HepG2 (cell line): ENCODE measurements at regions of chr2 and their contacts with region 1.

Region 1: DNA sequence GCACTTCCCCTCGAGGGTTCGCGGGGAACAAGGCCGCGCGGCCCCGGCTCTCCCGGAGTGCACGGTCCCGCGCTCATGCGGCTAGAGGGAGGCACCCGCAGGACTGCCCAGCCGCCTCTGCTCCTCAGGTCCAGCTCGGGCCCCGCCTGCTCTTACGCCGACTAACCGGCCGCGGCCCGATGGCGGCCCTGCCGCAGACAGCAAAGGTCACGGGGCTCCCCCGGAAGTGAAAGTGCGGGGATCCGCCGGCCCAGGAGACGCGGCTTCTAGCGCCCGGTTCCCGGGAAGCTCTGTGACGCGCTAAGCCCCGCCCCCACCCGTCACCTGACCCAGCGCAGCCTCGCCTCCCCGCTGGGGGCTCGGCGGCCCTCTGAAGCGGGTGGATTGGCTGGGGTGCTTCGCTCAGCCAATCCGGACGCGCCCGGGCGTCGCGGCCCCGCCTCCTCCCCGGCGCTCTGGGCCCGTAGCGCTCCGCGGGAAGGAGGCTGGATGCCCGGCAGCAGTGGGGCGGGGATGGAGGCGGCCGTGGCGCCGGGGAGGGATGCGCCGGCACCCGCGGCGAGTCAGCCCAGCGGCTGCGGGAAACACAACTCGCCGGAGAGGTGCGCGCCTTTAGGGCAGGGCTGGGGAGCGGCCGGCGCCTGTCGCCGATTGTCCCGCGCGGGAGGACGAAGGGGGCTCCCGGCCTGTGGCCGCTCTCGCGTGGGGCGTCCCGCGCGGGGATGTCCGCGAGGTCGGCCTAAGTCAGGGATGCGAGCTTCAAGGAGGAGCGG is at the start of gene SCLY:
- DNase-seq: peak; percentile 97
- ATAC-seq: peak; percentile 96
- H3K4me3 ChIP-seq: peak within 1 kb of the TSS; percentile 97 to 99 (median 98)
- H3K27ac ChIP-seq: peak within 1 kb of the TSS; percentile 91
- H3K4me1 ChIP-seq: peaks cover 59% of the 10 kb centered on the region
- H3K27me3 ChIP-seq: no peaks in the 10 kb centered on the region; a peak in 1 of 5 replicates
- CTCF ChIP-seq: peak; percentile 3; the same call in 1 of the 2 replicates
- EP300 ChIP-seq: 0 out of 4 replicates have a peak, but pooled peaks of 1 of the 2 experiments have one; percentile 35
- POLR2A ChIP-seq: peak; percentile 87 to 91
- RAD21 ChIP-seq: peak; percentile 75
- total RNA-seq, gene SCLY: 31.6 and 38.6 TPM in 2 replicates

Region 2: DNA sequence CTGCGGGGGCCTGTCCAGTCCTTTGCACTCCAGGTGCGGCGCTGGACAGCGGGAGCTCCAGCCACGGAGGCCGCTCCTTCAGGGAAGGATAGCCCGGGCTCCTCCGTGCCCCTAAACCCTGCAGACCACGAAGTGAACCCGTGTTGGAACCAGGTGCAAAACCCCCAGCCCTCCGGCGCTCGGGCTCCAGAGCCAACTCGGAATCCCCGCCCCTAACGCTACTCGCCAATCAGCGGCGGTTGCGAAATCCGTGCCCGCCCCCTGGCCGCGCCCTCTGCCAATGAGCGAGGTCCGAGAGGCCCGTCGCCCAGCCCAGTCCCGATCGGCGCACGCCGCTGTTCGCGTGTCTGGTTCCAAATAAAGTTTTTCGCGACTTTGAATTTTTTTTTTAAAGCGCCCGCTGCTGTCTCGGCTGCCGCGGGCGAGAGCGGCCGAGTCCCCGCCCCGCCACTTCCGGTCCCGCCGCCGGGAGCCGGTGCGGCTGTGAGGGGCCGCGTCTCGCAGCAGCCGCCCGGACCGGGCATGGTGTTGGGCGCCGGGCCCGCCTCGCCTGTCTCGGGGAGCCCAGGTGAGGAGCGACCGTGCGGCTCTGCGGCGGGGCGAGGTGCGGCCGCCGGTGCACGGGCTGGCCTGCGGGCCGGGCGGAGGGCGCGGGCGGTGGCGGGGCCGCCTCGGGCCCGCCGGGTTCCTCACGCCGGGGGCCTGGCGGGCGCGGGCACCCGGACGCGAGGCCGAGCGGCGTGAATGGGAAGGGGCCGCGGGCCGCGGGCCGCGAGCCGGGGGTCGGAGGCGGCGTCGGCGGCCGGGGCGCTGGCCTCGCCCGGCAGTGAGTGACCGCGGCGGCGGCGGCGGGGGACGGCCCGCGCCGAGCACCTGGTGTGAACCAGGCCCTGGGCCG is 93.9 kb before region 1 on chr2 and contains the start of gene UBE2F:
- CTCF ChIA-PET with region 1: no interaction called
- POLR2A ChIA-PET with region 1: interaction called, 4 read pairs
- in situ Hi-C with region 1: loop called (anchors 5 kb)
- intact Hi-C with region 1: loop called (anchors 5 kb)
- DNase-seq: peak; percentile 95
- ATAC-seq: peak; percentile 93
- H3K4me3 ChIP-seq: peak within 1 kb of the TSS; percentile 89 to 99 (median 92)
- H3K27ac ChIP-seq: peak within 1 kb of the TSS; percentile 45
- H3K4me1 ChIP-seq: peaks cover 43% of the 10 kb centered on the region
- H3K27me3 ChIP-seq: peaks cover 0 to 16% of the 10 kb centered on the region in 2 experiments; a peak in 3 of 5 replicates
- CTCF ChIP-seq: no peak
- EP300 ChIP-seq: peak; percentile 72 to 89
- POLR2A ChIP-seq: peak; percentile 49 to 85; a peak in 3 of 4 replicates
- RAD21 ChIP-seq: peak; percentile 45
- total RNA-seq, gene UBE2F: 73.1 and 79.8 TPM in 2 replicates

Region 3: DNA sequence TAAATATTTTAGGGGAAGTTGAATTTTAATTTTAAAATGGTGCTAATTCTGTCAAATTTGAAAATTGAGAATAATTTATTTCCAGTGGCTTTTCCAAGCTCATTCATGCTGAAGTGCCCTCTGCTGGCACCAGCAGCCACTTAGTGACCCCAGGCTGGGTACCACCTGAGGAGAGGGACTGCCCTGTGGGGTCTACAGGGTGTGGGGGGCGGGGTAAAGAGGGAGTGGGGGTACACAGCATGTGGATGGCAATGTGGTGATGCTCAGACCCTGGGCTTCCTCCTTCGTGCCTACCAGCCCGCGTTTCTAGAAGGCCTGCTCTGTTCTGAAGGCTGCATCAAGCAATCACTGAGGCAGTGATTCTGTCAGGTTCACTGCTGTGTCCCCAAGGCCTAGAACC is 45.0 kb before region 1 on chr2:
- CTCF ChIA-PET with region 1: no interaction called
- POLR2A ChIA-PET with region 1: no interaction called
- in situ Hi-C with region 1: no loop called
- intact Hi-C with region 1: no loop called
- DNase-seq: no peak
- ATAC-seq: peak; percentile 35; the same call in 1 of the 3 replicates
- H3K4me3 ChIP-seq: no peak overlapping the region
- H3K27ac ChIP-seq: no peak overlapping the region
- H3K4me1 ChIP-seq: no peaks in the 10 kb centered on the region
- H3K27me3 ChIP-seq: no peaks in the 10 kb centered on the region
- CTCF ChIP-seq: peak; percentile 30; the same call in 1 of the 2 replicates
- EP300 ChIP-seq: no peak
- POLR2A ChIP-seq: no peak
- RAD21 ChIP-seq: no peak

Region 4: DNA sequence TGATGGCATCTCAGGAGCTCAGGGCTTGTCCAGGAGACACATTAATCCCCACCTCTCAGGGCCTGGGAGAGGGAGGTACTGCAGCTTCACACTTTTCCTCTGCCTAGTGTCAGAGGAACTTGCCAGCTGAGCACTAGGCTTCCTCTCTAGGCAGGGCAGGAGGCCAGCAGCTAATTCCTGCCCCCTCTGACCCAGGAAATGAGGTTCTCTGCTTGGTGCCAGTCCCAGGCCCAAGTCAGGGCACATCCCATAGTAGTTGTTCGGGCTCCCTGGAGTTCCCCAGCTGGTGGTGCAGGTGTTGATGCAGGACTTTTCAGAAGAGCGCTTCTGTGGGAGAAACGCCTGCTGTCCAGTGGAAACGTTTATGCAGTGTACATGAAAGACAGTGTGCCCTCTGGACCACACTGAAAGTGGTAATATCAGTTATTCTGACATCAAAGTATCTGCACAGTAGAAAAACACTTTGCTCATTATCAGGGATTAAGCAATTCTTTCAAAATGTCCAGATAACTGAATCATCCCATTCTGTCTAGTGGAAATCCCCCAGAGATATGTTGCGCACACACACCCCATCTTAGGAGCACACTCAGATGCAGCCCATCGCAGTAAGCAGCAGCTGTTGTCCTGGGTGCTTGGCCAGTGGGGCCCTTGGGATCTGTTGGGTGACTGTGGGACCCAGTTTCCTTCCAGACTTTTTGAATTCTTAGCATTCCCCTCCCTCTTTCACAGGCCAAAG is 17.7 kb before region 1 on chr2:
- CTCF ChIA-PET with region 1: no interaction called
- POLR2A ChIA-PET with region 1: interaction called, 12 read pairs
- in situ Hi-C with region 1: no loop called
- intact Hi-C with region 1: no loop called
- DNase-seq: no peak
- ATAC-seq: no peak
- H3K4me3 ChIP-seq: no peak overlapping the region
- H3K27ac ChIP-seq: no peak overlapping the region
- H3K4me1 ChIP-seq: no peaks in the 10 kb centered on the region
- H3K27me3 ChIP-seq: no peaks in the 10 kb centered on the region
- CTCF ChIP-seq: no peak
- EP300 ChIP-seq: no peak
- POLR2A ChIP-seq: no peak
- RAD21 ChIP-seq: no peak

Region 5: DNA sequence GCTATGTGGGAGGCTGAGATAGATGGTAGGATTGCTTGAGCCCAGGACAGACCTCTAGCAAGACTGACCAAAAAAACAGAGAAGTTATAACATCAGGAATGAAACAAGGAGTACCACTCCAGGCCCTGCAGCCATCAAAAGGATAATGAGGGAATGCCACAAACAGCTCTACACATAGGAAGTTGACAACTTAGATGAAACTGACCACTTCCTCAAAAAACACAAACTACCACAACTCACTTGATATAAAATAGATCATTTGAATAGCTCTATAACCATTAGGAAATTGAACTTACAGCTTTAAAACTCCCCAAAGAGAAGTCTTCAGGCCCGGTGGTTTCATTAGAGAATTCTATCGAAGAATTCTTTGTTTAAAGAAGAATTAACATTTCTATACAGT is 26.5 kb after region 1 on chr2:
- CTCF ChIA-PET with region 1: no interaction called
- POLR2A ChIA-PET with region 1: interaction called, 10 read pairs
- in situ Hi-C with region 1: no loop called
- intact Hi-C with region 1: no loop called
- DNase-seq: no peak
- ATAC-seq: no peak
- H3K4me3 ChIP-seq: no peak overlapping the region
- H3K27ac ChIP-seq: no peak overlapping the region
- H3K4me1 ChIP-seq: no peaks in the 10 kb centered on the region
- H3K27me3 ChIP-seq: no peaks in the 10 kb centered on the region
- CTCF ChIP-seq: no peak
- EP300 ChIP-seq: no peak
- POLR2A ChIP-seq: no peak
- RAD21 ChIP-seq: no peak

Region 6: DNA sequence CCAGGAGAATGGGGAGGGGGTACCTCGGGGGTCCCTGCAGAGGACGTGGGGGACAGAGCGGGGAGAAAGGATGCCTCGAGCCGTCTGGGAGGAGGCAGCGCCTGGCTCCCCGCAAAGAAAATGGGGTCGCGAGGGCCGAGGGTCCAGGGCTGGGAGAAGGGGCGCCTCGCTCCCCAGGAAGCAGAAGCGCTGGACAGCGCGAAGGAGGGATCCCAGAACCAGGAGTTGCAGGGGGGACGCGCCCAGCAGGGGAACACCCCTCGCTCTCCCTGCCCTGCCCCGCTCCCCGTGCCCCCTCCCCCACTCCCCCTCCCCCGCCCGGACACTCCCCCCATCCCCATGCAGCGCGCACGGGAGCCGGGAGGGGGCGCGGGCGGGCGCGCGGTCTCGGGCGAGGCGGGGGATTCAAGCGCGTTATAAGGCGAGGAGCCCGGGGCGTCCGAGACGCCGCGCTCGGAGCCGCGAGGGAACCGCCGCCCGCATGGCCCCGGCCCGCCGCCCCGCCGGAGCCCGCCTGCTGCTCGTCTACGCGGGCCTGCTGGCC is 97.9 kb after region 1 on chr2 and contains the start of gene ERFE:
- CTCF ChIA-PET with region 1: no interaction called
- POLR2A ChIA-PET with region 1: no interaction called
- in situ Hi-C with region 1: no loop called
- intact Hi-C with region 1: no loop called
- DNase-seq: no peak
- ATAC-seq: peak; percentile 25
- H3K4me3 ChIP-seq: peak within 1 kb of the TSS; percentile 33 to 60 (median 36); a peak in 5 of 6 replicates
- H3K27ac ChIP-seq: no peak within 1 kb of the TSS
- H3K4me1 ChIP-seq: peaks cover 24% of the 10 kb centered on the region
- H3K27me3 ChIP-seq: peaks cover 36 to 81% of the 10 kb centered on the region in 2 experiments
- CTCF ChIP-seq: peak; percentile 58
- EP300 ChIP-seq: no peak
- POLR2A ChIP-seq: no peak
- RAD21 ChIP-seq: no peak
- total RNA-seq, gene ERFE: not detected in 2 replicates

Region 7: DNA sequence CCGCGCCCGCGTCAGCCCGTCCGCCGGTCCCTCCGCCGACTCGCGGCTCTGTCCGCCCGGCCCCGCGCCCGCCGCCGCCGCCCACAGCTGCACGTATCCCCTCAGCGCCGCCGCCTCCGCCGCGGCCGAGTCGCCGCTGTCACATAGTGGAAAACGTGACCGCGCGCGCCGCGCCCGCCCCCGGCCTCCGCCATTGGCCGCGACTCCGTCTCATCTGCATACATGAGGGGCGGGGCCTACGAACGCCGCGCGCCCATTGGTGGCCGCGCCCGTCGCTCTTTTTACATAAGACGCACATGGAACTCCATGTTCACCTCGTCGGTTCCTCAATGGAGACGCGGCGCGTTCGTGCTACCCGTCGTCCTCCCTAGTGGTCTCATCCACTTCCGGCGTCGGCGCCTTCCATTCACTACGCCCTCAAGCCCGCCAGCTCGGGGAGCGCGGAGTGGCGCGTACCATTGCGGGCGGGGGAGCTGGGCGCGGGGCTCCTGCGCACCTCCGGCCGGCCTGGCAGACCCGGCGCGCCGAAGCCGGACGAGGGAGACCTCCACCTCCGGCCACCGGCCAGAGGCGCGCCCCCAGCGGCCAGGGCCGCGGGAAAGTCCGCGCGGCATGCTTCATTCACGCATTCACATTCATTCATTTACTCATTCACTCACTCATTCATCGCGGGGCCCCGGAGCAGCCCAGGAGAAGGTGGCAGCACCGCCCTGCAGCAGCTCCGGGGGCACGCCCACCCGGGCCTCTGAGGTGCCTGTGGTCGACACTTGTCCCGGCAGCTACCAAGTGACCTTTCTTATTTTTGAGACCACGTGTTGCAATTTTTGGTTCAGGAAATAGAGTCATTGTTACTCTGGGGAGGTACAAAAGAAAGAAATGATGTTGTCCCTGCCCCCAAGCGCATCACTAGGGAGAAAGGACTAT is 228.2 kb after region 1 on chr2:
- CTCF ChIA-PET with region 1: no interaction called
- POLR2A ChIA-PET with region 1: no interaction called
- in situ Hi-C with region 1: no loop called
- intact Hi-C with region 1: loop called (anchors 5 kb)
- DNase-seq: peak; percentile 99
- ATAC-seq: peak; percentile 77
- H3K4me3 ChIP-seq: peak overlapping the region; percentile 75 to 99 (median 87)
- H3K27ac ChIP-seq: peak overlapping the region; percentile 99
- H3K4me1 ChIP-seq: peaks cover 63% of the 10 kb centered on the region
- H3K27me3 ChIP-seq: no peaks in the 10 kb centered on the region; a peak in 1 of 5 replicates
- CTCF ChIP-seq: peak; percentile 46
- EP300 ChIP-seq: no peak
- POLR2A ChIP-seq: peak in 1 of 2 experiments; percentile 83; a peak in 2 of 4 replicates
- RAD21 ChIP-seq: peak; percentile 79